Endothelial cell of umbilical vein (primary cell): ENCODE measurements at regions of chr6 and their contacts with region 1.

Region 1: DNA sequence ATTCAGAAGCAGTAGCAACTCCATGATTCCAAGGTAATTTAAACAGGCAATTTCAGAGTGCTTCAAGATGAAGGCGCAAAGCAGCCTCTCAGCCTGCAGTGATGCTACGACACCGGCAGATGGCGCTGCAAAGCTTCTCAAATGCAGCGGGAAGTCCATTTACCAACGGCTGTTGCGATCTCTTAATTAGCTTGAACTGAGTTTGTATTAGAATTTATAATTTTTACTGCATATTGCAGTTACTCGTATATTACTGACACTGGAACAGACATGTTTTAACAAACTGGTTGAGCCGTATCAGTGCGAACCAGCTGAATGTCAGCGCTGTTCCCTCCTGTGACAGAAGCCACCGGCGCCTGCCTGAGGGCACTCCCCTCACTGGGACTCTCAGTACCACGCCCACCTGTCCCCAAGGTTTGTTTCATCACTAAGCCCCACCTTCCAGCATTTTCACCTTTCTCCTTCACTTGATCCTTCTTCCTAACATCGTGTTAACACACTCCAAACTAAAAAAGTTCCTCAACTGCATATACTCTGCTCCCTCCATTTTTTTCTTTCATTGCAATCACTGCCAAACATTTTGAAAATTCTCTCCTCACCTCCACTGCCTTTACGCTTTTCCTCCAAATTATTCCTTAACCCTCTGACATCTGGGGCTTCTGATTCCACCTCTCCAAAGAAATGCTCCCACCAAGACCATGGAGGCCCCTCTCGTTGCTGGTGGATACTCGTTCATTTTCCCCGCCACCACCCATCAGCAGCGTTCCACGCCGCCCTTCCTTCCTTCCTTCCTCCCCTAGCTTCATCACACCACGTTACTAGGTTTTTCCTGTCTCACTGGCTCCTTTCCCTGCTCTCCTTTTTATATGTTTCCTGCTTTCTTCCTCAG is 14.5 kb downstream of the GNL1 start:
- DNase-seq: peak; percentile 91
- H3K4me3 ChIP-seq: peak overlapping the region; percentile 18 to 47 (median 21)
- H3K27ac ChIP-seq: peak overlapping the region; percentile 81
- H3K4me1 ChIP-seq: peaks cover 29% of the 10 kb centered on the region
- H3K27me3 ChIP-seq: no peaks in the 10 kb centered on the region
- CTCF ChIP-seq: peak; percentile 96 to 99
- POLR2A ChIP-seq: peak; percentile 55

Region 2: DNA sequence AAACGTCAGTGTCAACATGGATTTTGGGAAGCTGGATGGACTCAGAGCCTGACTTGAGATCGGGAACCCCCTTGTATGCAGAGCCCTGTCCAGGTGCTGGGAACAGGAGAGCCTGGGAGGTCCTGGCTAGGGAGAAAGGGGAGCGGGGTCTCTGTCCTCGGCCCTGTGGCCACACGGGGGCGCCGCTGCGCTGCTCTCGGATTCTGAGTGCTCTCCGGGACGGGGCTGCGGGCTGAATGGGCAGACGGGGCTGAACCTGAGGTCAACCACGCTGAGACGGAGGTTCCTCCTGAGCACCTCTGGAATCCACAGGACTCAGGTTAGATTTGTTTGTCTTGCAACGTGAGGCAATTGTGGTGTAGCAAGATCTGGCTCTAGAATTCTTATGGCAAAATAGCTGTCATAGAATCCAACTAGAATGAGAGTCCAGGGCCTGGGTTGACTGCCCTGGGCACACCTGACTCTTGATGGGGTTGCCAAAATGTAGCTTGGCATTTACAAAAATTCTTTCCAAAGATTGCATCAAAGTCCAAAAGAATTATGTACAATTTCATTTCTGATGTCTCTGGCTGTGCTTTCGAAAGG is 839.1 kb before region 1 on chr6:
- CTCF ChIA-PET with region 1: no interaction called
- POLR2A ChIA-PET with region 1: no interaction called
- dilution Hi-C with region 1: no loop called
- intact Hi-C with region 1: no loop called
- DNase-seq: peak; percentile 48
- H3K4me3 ChIP-seq: no peak overlapping the region
- H3K27ac ChIP-seq: no peak overlapping the region
- H3K4me1 ChIP-seq: no peaks in the 10 kb centered on the region
- H3K27me3 ChIP-seq: peaks cover 5 to 9% of the 10 kb centered on the region in 2 experiments
- CTCF ChIP-seq: peak; percentile 72 to 98
- POLR2A ChIP-seq: no peak

Region 3: GRCh38 chr6:30311101-30311500 is 230.7 kb before region 1 on chr6:
- CTCF ChIA-PET with region 1: no interaction called
- POLR2A ChIA-PET with region 1: no interaction called
- dilution Hi-C with region 1: no loop called
- intact Hi-C with region 1: no loop called
- DNase-seq: no peak
- H3K4me3 ChIP-seq: no peak overlapping the region
- H3K27ac ChIP-seq: no peak overlapping the region
- H3K4me1 ChIP-seq: no peaks in the 10 kb centered on the region
- H3K27me3 ChIP-seq: no peaks in the 10 kb centered on the region
- CTCF ChIP-seq: no peak
- POLR2A ChIP-seq: no peak

Region 4: GRCh38 chr6:30453508-30454116 is 88.1 kb before region 1 on chr6:
- CTCF ChIA-PET with region 1: interaction called, 19 read pairs
- POLR2A ChIA-PET with region 1: no interaction called
- dilution Hi-C with region 1: no loop called
- intact Hi-C with region 1: no loop called
- DNase-seq: peak; percentile 93
- H3K4me3 ChIP-seq: no peak overlapping the region
- H3K27ac ChIP-seq: no peak overlapping the region
- H3K4me1 ChIP-seq: no peaks in the 10 kb centered on the region
- H3K27me3 ChIP-seq: peaks cover 76 to 87% of the 10 kb centered on the region in 2 experiments
- CTCF ChIP-seq: peak; percentile 96
- POLR2A ChIP-seq: no peak

Region 5: DNA sequence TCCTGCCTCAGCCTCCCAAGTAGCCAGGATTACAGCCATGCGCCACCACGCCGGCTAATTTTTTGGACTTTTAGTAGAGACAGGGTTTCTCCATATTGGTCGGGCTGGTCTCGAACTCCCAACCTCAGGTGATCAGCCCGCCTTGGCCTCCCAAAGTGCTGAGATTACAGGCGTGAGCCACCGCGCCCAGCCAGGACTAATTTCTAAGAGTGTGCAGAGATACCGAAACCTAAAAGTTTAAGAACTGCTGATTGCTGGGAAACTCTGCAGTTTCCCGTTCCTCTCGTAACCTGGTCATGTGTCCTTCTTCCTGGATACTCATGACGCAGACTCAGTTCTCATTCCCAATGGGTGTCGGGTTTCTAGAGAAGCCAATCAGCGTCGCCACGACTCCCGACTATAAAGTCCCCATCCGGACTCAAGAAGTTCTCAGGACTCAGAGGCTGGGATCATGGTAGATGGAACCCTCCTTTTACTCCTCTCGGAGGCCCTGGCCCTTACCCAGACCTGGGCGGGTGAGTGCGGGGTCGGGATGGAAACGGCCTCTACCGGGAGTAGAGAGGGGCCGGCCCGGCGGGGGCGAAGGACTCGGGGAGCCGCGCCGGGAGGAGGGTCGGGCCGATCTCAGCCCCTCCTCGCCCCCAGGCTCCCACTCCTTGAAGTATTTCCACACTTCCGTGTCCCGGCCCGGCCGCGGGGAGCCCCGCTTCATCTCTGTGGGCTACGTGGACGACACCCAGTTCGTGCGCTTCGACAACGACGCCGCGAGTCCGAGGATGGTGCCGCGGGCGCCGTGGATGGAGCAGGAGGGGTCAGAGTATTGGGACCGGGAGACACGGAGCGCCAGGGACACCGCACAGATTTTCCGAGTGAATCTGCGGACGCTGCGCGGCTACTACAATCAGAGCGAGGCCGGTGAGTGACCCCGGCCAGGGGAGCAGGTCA is 52.4 kb before region 1 on chr6 and contains the start of gene HLA-E:
- CTCF ChIA-PET with region 1: interaction called, 522 read pairs
- POLR2A ChIA-PET with region 1: interaction called, 9 read pairs
- dilution Hi-C with region 1: no loop called
- intact Hi-C with region 1: no loop called
- DNase-seq: peak; percentile 99
- H3K4me3 ChIP-seq: peak within 1 kb of the TSS; percentile 76 to 94 (median 92)
- H3K27ac ChIP-seq: peak within 1 kb of the TSS; percentile 92
- H3K4me1 ChIP-seq: peaks cover 20% of the 10 kb centered on the region
- H3K27me3 ChIP-seq: no peaks in the 10 kb centered on the region
- CTCF ChIP-seq: no peak
- POLR2A ChIP-seq: peak; percentile 99
- total RNA-seq, gene HLA-E: 249 and 271 TPM in 2 replicates

Region 6: GRCh38 chr6:30515932-30516753 is 25.6 kb before region 1 on chr6:
- CTCF ChIA-PET with region 1: interaction called, 17 read pairs
- POLR2A ChIA-PET with region 1: no interaction called
- dilution Hi-C with region 1: no loop called
- intact Hi-C with region 1: loop called (anchors 1 kb)
- DNase-seq: peak; percentile 99
- H3K4me3 ChIP-seq: peak overlapping the region in 2 of 3 experiments; percentile 18 to 20
- H3K27ac ChIP-seq: peak overlapping the region; percentile 98
- H3K4me1 ChIP-seq: peaks cover 6% of the 10 kb centered on the region
- H3K27me3 ChIP-seq: no peaks in the 10 kb centered on the region
- CTCF ChIP-seq: no peak
- POLR2A ChIP-seq: peak; percentile 64

Region 7: GRCh38 chr6:30571075-30571768 is 29.5 kb after region 1 on chr6 and contains the start of gene ABCF1:
- CTCF ChIA-PET with region 1: interaction called, 20 read pairs
- POLR2A ChIA-PET with region 1: no interaction called
- dilution Hi-C with region 1: no loop called
- intact Hi-C with region 1: loop called (anchors 1 kb)
- DNase-seq: peak; percentile 99
- H3K4me3 ChIP-seq: peak within 1 kb of the TSS; percentile 57 to 86 (median 76)
- H3K27ac ChIP-seq: peak within 1 kb of the TSS; percentile 86
- H3K4me1 ChIP-seq: peaks cover 18% of the 10 kb centered on the region
- H3K27me3 ChIP-seq: no peaks in the 10 kb centered on the region
- CTCF ChIP-seq: no peak
- POLR2A ChIP-seq: no peak
- total RNA-seq, gene ABCF1: 55.8 and 60.3 TPM in 2 replicates

Region 8: DNA sequence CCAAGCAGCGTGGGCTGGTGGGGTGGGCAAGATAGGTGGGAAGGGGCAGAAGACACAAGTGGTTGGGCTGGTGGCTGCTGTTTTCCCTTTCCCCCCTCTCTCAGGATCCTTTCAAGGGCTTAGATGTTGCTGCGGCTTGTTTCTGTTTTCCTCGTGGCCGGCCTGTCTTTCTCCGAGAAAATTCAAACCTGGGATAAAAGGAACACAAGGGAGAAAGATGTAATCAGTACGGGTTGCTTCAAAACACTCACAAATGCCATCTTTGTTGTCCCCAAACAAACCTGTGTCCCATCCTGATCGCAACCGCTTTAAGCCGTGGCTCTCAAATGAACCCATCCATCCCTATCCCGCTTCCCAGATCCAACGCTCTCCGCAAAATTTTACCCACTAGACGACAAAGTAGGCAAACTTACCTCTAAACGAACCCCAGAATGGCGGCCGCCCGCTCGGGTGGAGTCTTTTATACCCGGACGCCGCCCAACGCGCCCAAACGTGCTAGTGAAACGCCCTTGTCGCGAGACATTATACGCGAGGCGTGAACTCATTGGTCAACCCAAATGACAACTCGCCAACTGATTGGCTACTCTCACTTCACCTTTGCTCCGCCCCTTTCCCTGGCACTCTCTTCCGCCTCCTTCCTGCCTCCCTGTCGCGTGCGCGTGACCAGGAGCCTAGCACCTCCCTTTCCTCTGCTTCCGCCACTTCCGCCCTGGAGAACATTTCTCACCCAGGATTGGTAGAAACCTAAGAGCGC is 75.2 kb after region 1 on chr6 and contains the start of gene PPP1R10:
- CTCF ChIA-PET with region 1: interaction called, 24 read pairs
- POLR2A ChIA-PET with region 1: interaction called, 9 read pairs
- dilution Hi-C with region 1: no loop called
- intact Hi-C with region 1: no loop called
- DNase-seq: peak; percentile 100
- H3K4me3 ChIP-seq: peak within 1 kb of the TSS; percentile 51 to 84 (median 73)
- H3K27ac ChIP-seq: peak within 1 kb of the TSS; percentile 96
- H3K4me1 ChIP-seq: peaks cover 21% of the 10 kb centered on the region
- H3K27me3 ChIP-seq: no peaks in the 10 kb centered on the region
- CTCF ChIP-seq: no peak
- POLR2A ChIP-seq: peak; percentile 100
- total RNA-seq, gene PPP1R10: 75.1 and 88.3 TPM in 2 replicates